CD8-positive, alpha-beta T cell (primary cell): ENCODE measurements at regions of chr10 and their contacts with region 1.

Region 1: GRCh38 chr10:49512121-49512809 is 26.7 kb downstream of the ERCC6 start:
- DNase-seq: peak in 3 of 9 experiments; percentile 20 to 64 (median 47)
- ATAC-seq: peak; percentile 58
- H3K4me3 ChIP-seq: no peak overlapping the region
- H3K4me3 Mint-ChIP-seq: no peak overlapping the region
- H3K27ac ChIP-seq: no peak overlapping the region
- H3K27ac Mint-ChIP-seq: no peak overlapping the region
- H3K4me1 ChIP-seq: peaks cover 20% of the 10 kb centered on the region
- H3K4me1 Mint-ChIP-seq: peaks cover 27% of the 10 kb centered on the region
- H3K27me3 ChIP-seq: no peaks in the 10 kb centered on the region
- H3K27me3 Mint-ChIP-seq: peaks cover 7% of the 10 kb centered on the region
- CTCF ChIP-seq: peak; percentile 73

Region 2: GRCh38 chr10:48981310-48981907 is 530.9 kb before region 1 on chr10:
- CTCF ChIA-PET with region 1: no interaction called
- POLR2A ChIA-PET with region 1: no interaction called
- intact Hi-C with region 1: loop called in 1 of 2 experiments (anchors 1 kb)
- DNase-seq: peak in 6 of 9 experiments; percentile 7 to 38 (median 21)
- ATAC-seq: no peak
- H3K4me3 ChIP-seq: no peak overlapping the region
- H3K4me3 Mint-ChIP-seq: no peak overlapping the region
- H3K27ac ChIP-seq: no peak overlapping the region
- H3K27ac Mint-ChIP-seq: no peak overlapping the region
- H3K4me1 ChIP-seq: no peaks in the 10 kb centered on the region
- H3K4me1 Mint-ChIP-seq: no peaks in the 10 kb centered on the region
- H3K27me3 ChIP-seq: no peaks in the 10 kb centered on the region
- H3K27me3 Mint-ChIP-seq: no peaks in the 10 kb centered on the region
- CTCF ChIP-seq: peak; percentile 58

Region 3: GRCh38 chr10:49407552-49408137 is 104.6 kb before region 1 on chr10:
- CTCF ChIA-PET with region 1: interaction called, 128 read pairs
- POLR2A ChIA-PET with region 1: interaction called, 3 read pairs
- intact Hi-C with region 1: loop called (anchors 1 kb)
- DNase-seq: peak; percentile 44 to 84 (median 71)
- ATAC-seq: peak; percentile 63
- H3K4me3 ChIP-seq: no peak overlapping the region
- H3K4me3 Mint-ChIP-seq: no peak overlapping the region
- H3K27ac ChIP-seq: no peak overlapping the region
- H3K27ac Mint-ChIP-seq: no peak overlapping the region
- H3K4me1 ChIP-seq: no peaks in the 10 kb centered on the region
- H3K4me1 Mint-ChIP-seq: no peaks in the 10 kb centered on the region
- H3K27me3 ChIP-seq: no peaks in the 10 kb centered on the region
- H3K27me3 Mint-ChIP-seq: peaks cover 58% of the 10 kb centered on the region
- CTCF ChIP-seq: peak; percentile 78

Region 4: GRCh38 chr10:49538381-49539319 is 26.4 kb after region 1 on chr10 and contains the start of gene ERCC6:
- CTCF ChIA-PET with region 1: interaction called, 6 read pairs
- POLR2A ChIA-PET with region 1: interaction called, 4 read pairs
- intact Hi-C with region 1: loop called in 1 of 2 experiments (anchors 2 kb)
- DNase-seq: peak; percentile 93 to 98 (median 96)
- ATAC-seq: peak; percentile 95
- H3K4me3 ChIP-seq: peak within 1 kb of the TSS; percentile 75 to 77
- H3K4me3 Mint-ChIP-seq: peak within 1 kb of the TSS; percentile 96
- H3K27ac ChIP-seq: peak within 1 kb of the TSS; percentile 72 to 84
- H3K27ac Mint-ChIP-seq: peak within 1 kb of the TSS; percentile 96
- H3K4me1 ChIP-seq: peaks cover 9% of the 10 kb centered on the region
- H3K4me1 Mint-ChIP-seq: peaks cover 43% of the 10 kb centered on the region
- H3K27me3 ChIP-seq: no peaks in the 10 kb centered on the region
- H3K27me3 Mint-ChIP-seq: peaks cover 13% of the 10 kb centered on the region
- CTCF ChIP-seq: no peak
- total RNA-seq, gene ERCC6: 37.2 to 38.7 TPM